ENCODE measurements at regions of chr1 and their contacts with region 1.

Region 1: DNA sequence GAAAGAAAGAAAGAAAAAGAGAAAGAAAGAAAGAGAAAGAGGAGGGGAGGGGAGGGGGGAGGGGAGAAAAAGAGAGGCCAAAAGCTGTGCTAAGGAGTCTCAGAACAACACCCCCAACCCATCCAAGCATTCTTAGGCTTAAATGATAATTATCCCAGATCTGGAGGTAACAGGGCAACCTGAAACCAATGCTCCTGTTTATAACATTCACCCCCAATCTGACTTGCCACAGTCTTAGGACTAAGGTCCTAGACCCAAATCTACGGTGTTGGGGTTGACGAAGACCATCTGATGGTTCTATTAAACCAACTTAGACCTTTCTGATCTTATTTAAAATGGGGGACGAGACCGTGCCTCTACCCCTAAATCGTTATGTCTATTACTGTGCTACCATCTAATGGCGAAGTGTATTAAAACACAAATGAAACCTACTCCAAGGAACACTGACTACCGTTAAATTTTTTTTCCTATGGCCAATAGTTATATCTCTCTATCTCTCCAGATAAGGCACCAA is 119.3 kb upstream of the CDC42BPA start:
- DNase-seq: no peak
- ATAC-seq: peak; percentile 65 to 92 (median 89)
- H3K4me3 ChIP-seq: peak overlapping the region in 2 of 4 donors; percentile 25 to 38
- H3K27ac ChIP-seq: no peak overlapping the region
- H3K4me1 ChIP-seq: no peaks in the 10 kb centered on the region
- H3K27me3 ChIP-seq: no peaks in the 10 kb centered on the region
- CTCF ChIP-seq: peak in 2 of 4 donors; percentile 10 to 16

Region 2: DNA sequence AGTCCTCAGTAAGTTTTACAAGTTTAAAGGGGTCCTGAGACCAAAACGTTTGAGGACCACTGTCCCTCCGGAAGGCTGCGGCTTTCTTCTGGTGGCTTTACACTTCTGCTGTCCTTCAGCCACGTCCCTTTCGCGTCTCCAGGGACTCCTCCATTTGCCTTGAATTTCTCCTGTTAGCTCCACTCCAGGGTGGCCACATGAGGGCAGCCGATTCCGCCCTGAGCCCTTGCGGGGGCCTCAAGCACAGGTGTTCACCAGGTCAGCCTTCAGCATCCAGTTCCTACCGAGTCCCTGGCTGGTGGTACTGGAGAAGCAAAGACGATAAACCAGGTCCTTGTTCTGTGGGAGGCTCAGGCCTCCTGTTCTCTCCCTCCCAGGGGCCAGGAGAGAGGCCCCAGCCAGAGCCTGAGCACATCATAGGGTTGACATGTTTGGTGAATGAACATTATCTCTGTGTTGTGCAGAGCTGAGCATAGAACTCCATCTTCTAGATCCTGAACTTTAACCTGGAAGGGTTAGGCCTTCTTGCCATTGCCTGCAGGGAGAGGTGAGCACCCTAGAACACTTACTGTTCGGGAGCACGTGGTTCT is 524.9 kb before region 1 on chr1:
- intact Hi-C with region 1: loop called in 2 of 3 experiments (anchors 5 to 10 kb)
- DNase-seq: peak; percentile 65 to 90 (median 80)
- ATAC-seq: peak; percentile 89 to 99 (median 98)
- H3K4me3 ChIP-seq: no peak overlapping the region
- H3K27ac ChIP-seq: no peak overlapping the region
- H3K4me1 ChIP-seq: no peaks in the 10 kb centered on the region
- H3K27me3 ChIP-seq: no peaks in the 10 kb centered on the region
- CTCF ChIP-seq: peak; percentile 23 to 75 (median 68)

Region 3: DNA sequence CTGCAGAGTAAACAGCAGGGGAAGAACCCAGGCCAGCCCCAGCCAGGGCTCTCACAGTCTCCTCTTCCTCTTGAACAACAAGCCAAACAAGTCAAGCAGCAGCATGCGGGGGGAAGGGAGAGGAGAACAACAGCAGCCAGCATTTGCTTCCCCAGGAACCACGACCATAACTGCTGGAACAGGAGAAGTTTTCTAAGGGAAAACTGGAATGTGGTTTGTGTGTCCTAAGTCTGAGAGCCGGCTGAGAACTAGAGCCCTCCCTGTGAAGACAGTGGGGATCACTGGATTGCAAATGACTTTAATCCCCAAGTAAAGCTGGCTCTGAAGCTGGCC is 449.3 kb before region 1 on chr1:
- intact Hi-C with region 1: no loop called
- DNase-seq: peak in 2 of 6 donors; percentile 15 to 55
- ATAC-seq: peak in 3 of 4 donors; percentile 33 to 58 (median 37)
- H3K4me3 ChIP-seq: no peak overlapping the region
- H3K27ac ChIP-seq: peak overlapping the region in 1 of 4 donors; percentile 34
- H3K4me1 ChIP-seq: peaks cover 8 to 25% (median 20%) of the 10 kb centered on the region in 3 donors
- H3K27me3 ChIP-seq: no peaks in the 10 kb centered on the region
- CTCF ChIP-seq: no peak

Region 4: GRCh38 chr1:227234998-227235405 is 202.6 kb before region 1 on chr1:
- intact Hi-C with region 1: loop called in 1 of 3 experiments (anchors 10 kb)
- DNase-seq: no peak
- ATAC-seq: peak; percentile 68 to 97 (median 90)
- H3K4me3 ChIP-seq: no peak overlapping the region
- H3K27ac ChIP-seq: no peak overlapping the region
- H3K4me1 ChIP-seq: peaks cover 0 to 6% (median 0%) of the 10 kb centered on the region in 3 donors
- H3K27me3 ChIP-seq: no peaks in the 10 kb centered on the region
- CTCF ChIP-seq: peak in 1 of 4 donors; percentile 11

Measured in pancreas (tissue), 10 donors.